ENCODE measurements at regions of chr16 and their contacts with region 1.

Region 1: DNA sequence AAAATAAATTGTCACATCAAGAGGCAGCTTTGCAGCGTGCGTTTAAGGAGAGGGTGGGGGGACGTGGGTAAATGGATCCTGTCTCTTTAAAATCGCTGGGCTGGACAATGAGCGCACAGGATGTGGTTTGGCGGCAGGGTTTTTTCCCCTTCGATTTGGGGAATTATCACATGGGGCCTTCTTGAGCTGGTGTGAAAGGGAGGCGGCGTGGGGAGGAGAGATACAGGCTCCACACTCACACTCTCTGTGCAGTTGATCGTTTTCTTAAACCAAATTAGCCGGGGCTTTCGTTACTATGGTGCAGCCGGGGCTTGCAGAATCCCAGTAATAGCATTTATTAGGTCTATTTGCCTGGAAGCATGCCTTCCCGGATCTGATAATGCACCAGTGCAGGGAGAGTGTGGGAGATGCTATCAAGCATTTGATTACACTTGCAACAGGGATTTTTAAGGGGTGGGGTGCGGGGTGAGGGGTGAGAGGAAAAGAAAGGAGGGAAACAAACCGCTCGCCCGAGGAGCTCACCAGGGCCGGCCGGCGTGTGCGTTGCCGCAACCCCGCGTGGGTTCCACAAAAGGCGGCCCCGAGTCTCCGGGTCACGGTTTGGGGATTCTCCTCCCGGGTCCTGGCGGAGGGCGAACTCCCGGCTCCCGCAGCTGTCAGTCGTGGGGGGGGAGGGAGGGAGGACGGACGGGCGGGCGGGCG is 58.9 kb upstream of the GSE1 start:
- DNase-seq: peak; percentile 94
- H3K4me3 Mint-ChIP-seq: peak overlapping the region; percentile 89
- H3K27ac Mint-ChIP-seq: peak overlapping the region; percentile 93
- H3K4me1 Mint-ChIP-seq: peaks cover 38% of the 10 kb centered on the region
- H3K27me3 Mint-ChIP-seq: peaks cover 8% of the 10 kb centered on the region

Region 2: DNA sequence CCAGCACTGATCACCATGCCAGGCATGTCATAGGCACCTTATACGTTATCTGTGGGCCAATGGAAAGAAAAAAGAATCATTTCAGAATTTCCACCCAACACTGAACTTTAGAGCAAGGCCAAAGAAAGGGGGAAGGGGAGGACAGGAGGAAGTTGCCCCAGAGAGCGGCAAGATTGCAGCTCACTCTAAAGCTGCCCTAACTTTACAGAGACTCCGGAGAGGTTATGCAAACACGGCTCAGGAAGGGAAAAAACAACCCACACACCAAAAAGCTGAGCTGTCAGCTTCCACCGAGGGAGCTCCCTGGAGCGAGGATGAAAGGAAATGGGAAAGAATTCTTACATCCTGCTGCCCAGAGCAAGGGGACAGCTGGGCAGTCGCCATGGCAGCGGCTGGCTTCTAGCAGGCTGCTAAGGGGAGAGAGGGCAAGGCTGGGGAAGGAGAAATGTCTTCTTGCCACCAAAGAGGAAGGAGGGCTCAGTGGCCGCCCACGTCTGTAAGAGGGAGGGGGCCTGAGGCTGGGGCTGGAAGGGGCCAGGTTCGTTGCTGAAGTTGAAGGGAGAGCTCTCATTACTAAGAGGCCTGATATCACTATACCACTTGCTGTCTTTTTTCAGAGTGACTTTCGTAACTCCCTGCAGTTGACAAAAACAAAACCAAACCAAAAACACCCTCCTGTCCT is 954.6 kb before region 1 on chr16:
- intact Hi-C with region 1: loop called (anchors 10 kb)
- DNase-seq: peak; percentile 87
- H3K4me3 Mint-ChIP-seq: peak overlapping the region; percentile 87
- H3K27ac Mint-ChIP-seq: peak overlapping the region; percentile 99
- H3K4me1 Mint-ChIP-seq: peaks cover 79% of the 10 kb centered on the region
- H3K27me3 Mint-ChIP-seq: no peaks in the 10 kb centered on the region

Region 3: GRCh38 chr16:85498273-85499006 is 55.8 kb before region 1 on chr16:
- intact Hi-C with region 1: no loop called
- DNase-seq: no peak
- H3K4me3 Mint-ChIP-seq: no peak overlapping the region
- H3K27ac Mint-ChIP-seq: no peak overlapping the region
- H3K4me1 Mint-ChIP-seq: no peaks in the 10 kb centered on the region
- H3K27me3 Mint-ChIP-seq: no peaks in the 10 kb centered on the region

Region 4: DNA sequence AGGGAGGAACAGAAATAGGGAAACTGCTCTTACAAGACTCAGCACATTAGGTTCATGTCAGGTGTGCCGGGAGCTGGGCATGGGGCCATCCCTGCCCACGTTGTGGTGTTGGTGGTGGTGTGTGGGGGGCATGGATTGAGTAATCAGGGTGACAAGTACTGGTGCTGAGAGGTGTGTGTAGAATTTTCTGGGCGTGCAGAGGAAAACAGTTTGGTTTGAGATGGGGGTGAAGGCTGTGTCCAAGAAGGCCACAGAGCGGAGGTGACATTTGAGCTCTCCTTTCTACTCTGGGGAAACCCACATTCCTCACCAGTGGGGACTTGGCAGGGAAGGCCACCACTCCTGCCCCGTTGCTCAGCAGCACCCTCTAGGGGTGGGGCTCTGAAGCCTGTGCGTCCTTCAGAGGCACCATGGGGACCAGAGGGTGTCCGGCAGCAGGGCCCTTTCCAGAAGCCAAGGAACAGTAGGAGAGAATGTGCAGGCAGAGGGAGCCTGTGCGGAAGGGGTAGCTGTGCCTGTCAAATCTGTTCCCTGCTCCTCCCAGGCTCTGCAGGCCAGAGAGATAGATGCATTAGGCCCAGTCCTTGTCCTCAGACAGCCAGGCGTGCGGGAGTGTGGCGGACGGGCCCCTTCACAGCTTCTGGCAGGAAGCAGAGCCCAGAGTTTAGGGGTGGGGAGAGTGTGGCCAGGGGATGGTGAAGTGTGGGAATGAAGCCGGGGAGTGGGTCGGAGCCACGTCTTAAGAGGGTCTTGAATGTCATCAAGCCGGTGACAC is 10.2 kb after region 1 on chr16:
- intact Hi-C with region 1: loop called (anchors 1 kb)
- DNase-seq: peak; percentile 77
- H3K4me3 Mint-ChIP-seq: no peak overlapping the region
- H3K27ac Mint-ChIP-seq: peak overlapping the region; percentile 58
- H3K4me1 Mint-ChIP-seq: peaks cover 26% of the 10 kb centered on the region
- H3K27me3 Mint-ChIP-seq: no peaks in the 10 kb centered on the region

Region 5: DNA sequence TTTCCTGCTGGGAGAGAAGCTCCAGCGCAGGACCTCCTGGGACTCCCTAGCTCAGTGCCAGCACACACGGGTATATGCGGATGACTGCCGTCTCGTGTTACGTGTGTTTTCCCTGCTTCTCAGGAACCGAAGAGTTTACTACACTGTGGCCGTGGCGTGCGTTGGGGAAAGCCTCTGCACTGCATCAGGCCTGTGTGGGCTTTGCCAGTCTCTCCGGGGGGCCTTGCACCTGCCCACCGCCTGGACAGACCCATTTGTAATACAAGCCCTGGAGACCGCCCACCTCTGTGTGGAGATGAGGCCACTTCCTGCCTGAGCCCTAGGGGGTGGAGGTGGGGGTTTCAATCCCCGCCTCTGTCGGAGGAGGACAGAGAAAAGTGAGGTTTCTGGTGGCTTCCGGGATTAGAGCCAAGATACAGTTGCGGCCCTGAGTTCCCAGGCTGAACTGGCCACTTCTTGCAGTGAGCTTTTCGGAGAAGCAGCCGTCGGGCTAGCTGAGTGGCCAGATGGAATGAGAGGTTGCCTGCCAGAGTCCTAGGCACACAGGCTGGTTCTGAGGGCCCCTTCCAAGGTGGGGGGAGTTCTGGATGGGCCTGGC is 15.5 kb after region 1 on chr16:
- intact Hi-C with region 1: loop called (anchors 1 kb)
- DNase-seq: no peak
- H3K4me3 Mint-ChIP-seq: peak overlapping the region; percentile 51
- H3K27ac Mint-ChIP-seq: peak overlapping the region; percentile 29
- H3K4me1 Mint-ChIP-seq: peaks cover 43% of the 10 kb centered on the region
- H3K27me3 Mint-ChIP-seq: no peaks in the 10 kb centered on the region

Region 6: GRCh38 chr16:85610508-85611332 is 56.5 kb after region 1 on chr16:
- intact Hi-C with region 1: loop called (anchors 1 kb)
- DNase-seq: peak; percentile 95
- H3K4me3 Mint-ChIP-seq: peak overlapping the region; percentile 78
- H3K27ac Mint-ChIP-seq: peak overlapping the region; percentile 66
- H3K4me1 Mint-ChIP-seq: peaks cover 23% of the 10 kb centered on the region
- H3K27me3 Mint-ChIP-seq: peaks cover 1% of the 10 kb centered on the region

Region 7: GRCh38 chr16:85688586-85689284 is 134.5 kb after region 1 on chr16 and contains the start of gene GINS2:
- intact Hi-C with region 1: loop called (anchors 5 kb)
- DNase-seq: peak; percentile 97
- H3K4me3 Mint-ChIP-seq: peak within 1 kb of the TSS; percentile 84
- H3K27ac Mint-ChIP-seq: peak within 1 kb of the TSS; percentile 78
- H3K4me1 Mint-ChIP-seq: peaks cover 17% of the 10 kb centered on the region
- H3K27me3 Mint-ChIP-seq: peaks cover 5% of the 10 kb centered on the region
- total RNA-seq, gene GINS2: 87.4 and 93.0 TPM in 2 replicates

Region 8: GRCh38 chr16:85799497-85800337 is 245.5 kb after region 1 on chr16 and contains the starts of genes COX4I1 and EMC8:
- intact Hi-C with region 1: loop called (anchors 2 kb)
- DNase-seq: peak; percentile 98
- H3K4me3 Mint-ChIP-seq: peak within 1 kb of the TSS; percentile 92
- H3K27ac Mint-ChIP-seq: peak within 1 kb of the TSS; percentile 97
- H3K4me1 Mint-ChIP-seq: peaks cover 46% of the 10 kb centered on the region
- H3K27me3 Mint-ChIP-seq: no peaks in the 10 kb centered on the region
- total RNA-seq, gene COX4I1: 555 and 569 TPM in 2 replicates
- total RNA-seq, gene EMC8: 49.1 and 57.1 TPM in 2 replicates

Region 9: DNA sequence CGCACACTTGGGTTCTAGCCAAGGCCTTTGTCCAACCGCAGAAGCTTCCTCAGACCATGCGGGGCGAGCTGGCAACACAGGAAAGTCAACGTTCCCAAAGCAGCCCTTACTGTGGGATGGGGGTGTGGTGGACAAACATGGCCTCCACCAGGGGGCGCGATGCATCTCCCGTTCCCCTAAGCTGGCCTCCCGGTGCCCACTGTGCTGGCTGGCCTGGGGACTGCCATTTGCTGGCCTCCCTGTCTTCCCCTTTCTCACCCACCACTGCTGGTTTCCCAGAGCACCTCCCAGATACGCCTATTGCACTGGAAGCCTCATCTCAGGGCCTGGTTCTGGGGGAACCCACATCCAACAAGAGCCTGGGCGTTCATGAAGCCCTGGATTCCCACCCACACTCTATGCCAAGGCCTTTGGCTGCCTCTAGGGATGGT is 490.0 kb after region 1 on chr16:
- intact Hi-C with region 1: no loop called
- DNase-seq: peak; percentile 76
- H3K4me3 Mint-ChIP-seq: no peak overlapping the region
- H3K27ac Mint-ChIP-seq: no peak overlapping the region
- H3K4me1 Mint-ChIP-seq: peaks cover 7% of the 10 kb centered on the region
- H3K27me3 Mint-ChIP-seq: peaks cover 32% of the 10 kb centered on the region

Measured in activated CD4-positive, alpha-beta T cell treated with anti-CD3 and anti-CD28 coated beads, Interleukin-2, amount 10 ng/mL, durations not matched to agents 24 days and 14 days (primary cell).